KBM-7 (cell line): ENCODE measurements at regions of chr15 and their contacts with region 1.

Region 1: GRCh38 chr15:28935326-28935725 is 49.6 kb downstream of the APBA2 start:
- DNase-seq: peak; percentile 47

Region 2: DNA sequence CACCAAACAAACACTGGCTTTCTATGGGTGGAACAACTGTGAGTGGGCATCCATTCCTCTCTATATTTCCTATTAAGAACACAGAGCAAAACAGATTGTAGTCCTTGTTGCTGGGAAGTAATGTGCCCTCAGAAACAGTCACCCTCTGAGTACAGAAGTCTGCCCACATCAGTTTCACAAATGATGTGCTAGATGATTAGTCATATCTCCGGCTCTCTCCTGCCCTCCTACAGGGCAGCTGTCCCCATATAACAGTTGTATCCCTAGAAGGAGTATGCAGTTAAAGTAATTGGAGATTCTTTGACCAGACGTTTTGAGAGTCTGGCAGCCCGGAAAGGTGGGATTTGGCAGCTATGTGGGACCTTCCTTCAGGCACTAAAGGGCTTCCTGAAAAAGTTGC is 110.4 kb after region 1 on chr15:
- in situ Hi-C with region 1: loop called (anchors 25 kb)
- DNase-seq: no peak